CD8-positive, alpha-beta T cell (primary cell): ENCODE measurements at regions of chr5 and their contacts with region 1.

Region 1: GRCh38 chr5:141664732-141665461 is 13.7 kb upstream of the FCHSD1 start:
- DNase-seq: peak; percentile 49 to 88 (median 76)
- ATAC-seq: peak; percentile 83
- H3K4me3 ChIP-seq: no peak overlapping the region
- H3K4me3 Mint-ChIP-seq: no peak overlapping the region
- H3K27ac ChIP-seq: no peak overlapping the region
- H3K27ac Mint-ChIP-seq: no peak overlapping the region
- H3K4me1 ChIP-seq: no peaks in the 10 kb centered on the region
- H3K4me1 Mint-ChIP-seq: peaks cover 3% of the 10 kb centered on the region
- H3K27me3 ChIP-seq: no peaks in the 10 kb centered on the region
- H3K27me3 Mint-ChIP-seq: no peaks in the 10 kb centered on the region
- CTCF ChIP-seq: peak; percentile 83

Region 2: DNA sequence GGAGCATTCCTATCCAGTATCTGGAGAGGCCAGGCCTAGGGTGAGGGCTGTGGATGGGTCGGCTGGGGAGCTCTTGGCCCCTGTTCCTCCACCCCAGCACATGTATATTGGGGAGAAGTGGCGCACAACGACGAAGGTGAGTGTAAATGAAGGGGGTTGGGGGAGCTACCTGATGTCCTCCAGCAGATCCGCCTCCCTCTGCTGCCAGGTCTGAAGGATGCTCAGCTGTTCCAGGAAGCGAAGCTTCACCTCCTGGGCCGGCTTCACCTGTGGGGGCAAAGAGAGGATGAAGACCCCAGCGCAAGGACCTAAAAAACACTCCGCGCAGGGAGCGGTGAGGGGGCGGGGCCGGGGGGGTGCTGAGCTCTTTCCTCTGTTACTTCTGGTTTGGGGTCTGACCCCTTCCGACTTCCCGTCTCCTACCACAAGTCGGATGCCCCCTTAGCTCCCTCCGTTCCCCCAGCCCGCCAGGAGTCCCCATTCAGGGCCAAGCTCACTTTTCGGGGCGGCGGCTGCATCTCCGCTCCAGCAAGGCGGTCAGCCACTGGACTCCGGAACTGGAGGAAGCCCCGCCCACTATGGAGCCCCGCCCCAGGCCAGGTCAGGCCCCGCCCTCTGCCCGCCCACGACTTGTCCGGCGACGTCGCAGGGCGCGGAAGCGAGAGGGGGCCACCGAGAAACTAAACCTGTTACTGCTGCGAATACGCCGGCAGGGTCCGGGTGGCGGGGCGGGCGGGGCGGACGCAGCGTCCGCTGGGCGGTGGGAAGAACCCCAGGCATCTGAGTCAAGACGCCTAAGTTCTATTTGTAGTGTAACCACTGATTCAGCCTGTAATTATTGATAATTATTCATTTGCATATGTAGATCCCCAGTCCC is 13.8 kb before region 1 on chr5 and contains the start of gene FCHSD1:
- CTCF ChIA-PET with region 1: interaction called, 13 read pairs
- POLR2A ChIA-PET with region 1: interaction called, 5 read pairs
- intact Hi-C with region 1: no loop called
- DNase-seq: peak; percentile 70 to 89 (median 81)
- ATAC-seq: peak; percentile 92
- H3K4me3 ChIP-seq: peak within 1 kb of the TSS; percentile 64
- H3K4me3 Mint-ChIP-seq: peak within 1 kb of the TSS; percentile 89
- H3K27ac ChIP-seq: peak within 1 kb of the TSS; percentile 63 to 73
- H3K27ac Mint-ChIP-seq: peak within 1 kb of the TSS; percentile 87
- H3K4me1 ChIP-seq: peaks cover 20% of the 10 kb centered on the region
- H3K4me1 Mint-ChIP-seq: peaks cover 52% of the 10 kb centered on the region
- H3K27me3 ChIP-seq: no peaks in the 10 kb centered on the region
- H3K27me3 Mint-ChIP-seq: no peaks in the 10 kb centered on the region
- CTCF ChIP-seq: no peak
- total RNA-seq, gene FCHSD1: 95.8 to 101 TPM

Region 3: GRCh38 chr5:141701360-141702119 is 36.6 kb after region 1 on chr5:
- CTCF ChIA-PET with region 1: interaction called, 19 read pairs
- POLR2A ChIA-PET with region 1: no interaction called
- intact Hi-C with region 1: loop called in 1 of 2 experiments (anchors 1 kb)
- DNase-seq: peak in 1 of 9 experiments; percentile 30
- ATAC-seq: peak; percentile 13
- H3K4me3 ChIP-seq: peak overlapping the region; percentile 57 to 89
- H3K4me3 Mint-ChIP-seq: no peak overlapping the region
- H3K27ac ChIP-seq: no peak overlapping the region
- H3K27ac Mint-ChIP-seq: no peak overlapping the region
- H3K4me1 ChIP-seq: peaks cover 15% of the 10 kb centered on the region
- H3K4me1 Mint-ChIP-seq: peaks cover 19% of the 10 kb centered on the region
- H3K27me3 ChIP-seq: peaks cover 0 to 3% of the 10 kb centered on the region in 2 experiments
- H3K27me3 Mint-ChIP-seq: peaks cover 45% of the 10 kb centered on the region
- CTCF ChIP-seq: no peak

Region 4: DNA sequence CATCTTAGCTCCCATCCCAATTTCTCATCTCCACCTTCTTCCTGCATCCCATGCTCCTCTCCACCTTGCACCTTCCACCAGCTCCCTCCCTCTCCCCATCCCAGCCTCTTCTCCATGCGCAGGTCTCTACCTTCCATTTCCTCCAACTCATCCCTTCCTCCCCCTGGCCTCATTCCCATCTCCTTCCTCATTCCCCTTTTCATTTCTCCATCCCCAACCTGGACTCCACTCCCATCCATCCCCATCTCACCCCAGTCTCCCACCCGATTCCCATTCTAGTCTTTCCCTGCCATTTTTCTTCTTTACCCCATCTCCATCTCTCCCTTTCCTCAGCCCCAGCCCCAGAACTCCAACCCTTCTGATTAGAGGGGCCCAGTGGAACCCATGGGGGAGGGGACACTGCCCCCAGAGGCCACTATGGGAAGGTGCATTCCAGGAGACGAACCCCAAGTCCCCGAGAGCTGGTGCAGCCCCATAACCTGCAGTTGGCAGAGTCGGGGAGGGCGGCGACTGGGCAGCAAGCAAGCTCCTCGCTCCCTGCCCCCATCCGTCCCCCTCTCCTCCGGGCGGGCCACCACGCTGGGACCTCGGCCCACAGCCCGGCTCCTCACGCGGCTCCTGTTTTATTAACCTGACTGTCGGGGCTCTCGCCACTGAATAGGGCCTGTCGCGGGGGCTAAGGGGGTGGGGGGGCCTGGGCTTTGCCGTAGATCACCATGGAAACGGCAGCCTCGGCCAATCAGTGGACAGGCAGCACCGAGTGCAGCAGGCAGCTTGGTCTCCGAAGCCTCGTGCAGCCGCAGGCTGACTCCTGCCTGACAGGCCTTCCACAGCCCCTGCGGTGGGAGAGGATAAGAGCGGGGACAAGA is 146.6 kb after region 1 on chr5:
- CTCF ChIA-PET with region 1: interaction called, 12 read pairs
- POLR2A ChIA-PET with region 1: no interaction called
- intact Hi-C with region 1: loop called in 1 of 2 experiments (anchors 1 kb)
- DNase-seq: peak in 7 of 9 experiments; percentile 2 to 61 (median 39)
- ATAC-seq: peak; percentile 83
- H3K4me3 ChIP-seq: no peak overlapping the region
- H3K4me3 Mint-ChIP-seq: no peak overlapping the region
- H3K27ac ChIP-seq: no peak overlapping the region
- H3K27ac Mint-ChIP-seq: no peak overlapping the region
- H3K4me1 ChIP-seq: no peaks in the 10 kb centered on the region
- H3K4me1 Mint-ChIP-seq: peaks cover 2% of the 10 kb centered on the region
- H3K27me3 ChIP-seq: peaks cover 5 to 11% of the 10 kb centered on the region in 2 experiments
- H3K27me3 Mint-ChIP-seq: peaks cover 47% of the 10 kb centered on the region
- CTCF ChIP-seq: peak; percentile 76

Region 5: GRCh38 chr5:142145106-142145900 is 480.4 kb after region 1 on chr5:
- CTCF ChIA-PET with region 1: interaction called, 5 read pairs
- POLR2A ChIA-PET with region 1: no interaction called
- intact Hi-C with region 1: loop called (anchors 10 kb)
- DNase-seq: peak; percentile 18 to 76 (median 61)
- ATAC-seq: peak; percentile 78
- H3K4me3 ChIP-seq: no peak overlapping the region
- H3K4me3 Mint-ChIP-seq: no peak overlapping the region
- H3K27ac ChIP-seq: no peak overlapping the region
- H3K27ac Mint-ChIP-seq: no peak overlapping the region
- H3K4me1 ChIP-seq: no peaks in the 10 kb centered on the region
- H3K4me1 Mint-ChIP-seq: peaks cover 13% of the 10 kb centered on the region
- H3K27me3 ChIP-seq: no peaks in the 10 kb centered on the region
- H3K27me3 Mint-ChIP-seq: no peaks in the 10 kb centered on the region
- CTCF ChIP-seq: peak; percentile 63